Activated B cell treated with CpG ODN at 0.5 μM for 24 hours (primary cell): ENCODE measurements at regions of chr5 and their contacts with region 1.

Region 1: DNA sequence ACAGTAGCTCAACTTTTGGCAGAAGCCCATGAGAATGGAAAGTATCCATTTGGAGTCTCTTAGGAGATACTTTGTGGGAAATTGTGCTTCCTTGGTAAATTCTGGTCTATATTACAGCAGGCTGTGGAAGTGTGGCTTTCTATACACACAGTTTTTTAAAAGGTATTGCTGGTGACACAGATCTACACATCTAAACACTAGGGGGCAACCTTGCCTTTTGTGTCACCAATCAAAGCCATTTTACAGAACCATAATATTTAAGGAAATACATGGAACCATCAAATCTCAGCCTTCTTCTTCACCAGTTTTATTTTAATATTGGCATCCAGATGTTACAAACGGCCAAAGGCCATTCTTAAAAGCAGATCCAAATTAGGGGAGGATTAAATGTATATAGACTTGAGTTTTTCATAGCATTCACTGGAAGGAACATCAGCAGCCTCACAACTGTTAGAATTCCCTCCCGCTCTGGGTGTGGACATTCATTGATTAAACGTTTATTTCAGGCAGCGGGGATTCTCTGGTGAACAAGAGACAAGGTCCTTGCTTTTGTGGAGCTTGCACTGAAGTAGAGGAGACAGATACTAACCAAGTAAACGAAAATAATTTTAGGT is 132.4 kb upstream of the EPB41L4A start:
- DNase-seq: no peak
- ATAC-seq: peak; percentile 77
- H3K4me3 Mint-ChIP-seq: no peak overlapping the region
- H3K27ac Mint-ChIP-seq: no peak overlapping the region
- H3K4me1 Mint-ChIP-seq: peaks cover 33% of the 10 kb centered on the region
- H3K27me3 Mint-ChIP-seq: no peaks in the 10 kb centered on the region
- CTCF ChIP-seq: peak; percentile 16

Region 2: GRCh38 chr5:111830333-111830732 is 721.2 kb before region 1 on chr5:
- CTCF ChIA-PET with region 1: no interaction called
- POLR2A ChIA-PET with region 1: no interaction called
- intact Hi-C with region 1: no loop called
- DNase-seq: no peak
- ATAC-seq: no peak
- H3K4me3 Mint-ChIP-seq: no peak overlapping the region
- H3K27ac Mint-ChIP-seq: no peak overlapping the region
- H3K4me1 Mint-ChIP-seq: no peaks in the 10 kb centered on the region
- H3K27me3 Mint-ChIP-seq: no peaks in the 10 kb centered on the region
- CTCF ChIP-seq: no peak

Region 3: DNA sequence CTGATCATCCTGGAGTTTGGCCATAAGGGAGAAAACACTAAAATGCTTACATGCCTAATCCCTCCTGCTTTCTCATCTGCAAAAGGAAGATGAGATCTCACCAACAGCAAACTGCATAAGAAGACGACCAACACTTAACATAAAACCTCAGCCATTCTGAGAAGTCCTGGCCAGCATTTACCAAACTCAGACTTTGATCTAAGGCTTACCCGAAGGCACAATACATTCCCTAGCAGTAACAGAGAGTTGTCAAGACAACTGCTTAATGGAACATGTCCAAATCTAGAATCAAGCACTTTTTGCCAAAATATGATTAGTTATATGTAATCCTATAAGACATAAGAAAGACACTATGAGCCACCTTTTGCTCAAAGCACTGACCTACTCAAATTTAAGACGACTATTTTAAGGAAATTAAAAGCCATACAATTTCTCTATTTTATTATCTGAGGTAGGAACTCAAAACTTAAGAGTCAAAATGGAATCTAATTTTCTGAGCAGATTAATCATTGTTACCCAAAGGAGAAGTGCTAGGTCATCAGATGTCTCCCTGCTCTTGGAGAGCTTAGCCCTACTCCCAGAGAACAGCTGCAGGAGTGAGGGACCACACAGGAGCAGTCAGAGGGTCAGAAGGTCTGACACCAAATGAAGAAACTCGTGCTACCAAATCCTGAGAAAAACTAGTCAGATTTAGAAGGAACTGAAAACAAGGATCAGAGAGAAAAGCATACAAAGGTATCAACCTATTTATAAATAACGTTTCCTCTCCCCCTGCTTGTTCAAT is 171.8 kb before region 1 on chr5:
- CTCF ChIA-PET with region 1: no interaction called
- POLR2A ChIA-PET with region 1: no interaction called
- intact Hi-C with region 1: no loop called
- DNase-seq: no peak
- ATAC-seq: no peak
- H3K4me3 Mint-ChIP-seq: no peak overlapping the region
- H3K27ac Mint-ChIP-seq: no peak overlapping the region
- H3K4me1 Mint-ChIP-seq: peaks cover 4% of the 10 kb centered on the region
- H3K27me3 Mint-ChIP-seq: peaks cover 5% of the 10 kb centered on the region
- CTCF ChIP-seq: no peak

Region 4: DNA sequence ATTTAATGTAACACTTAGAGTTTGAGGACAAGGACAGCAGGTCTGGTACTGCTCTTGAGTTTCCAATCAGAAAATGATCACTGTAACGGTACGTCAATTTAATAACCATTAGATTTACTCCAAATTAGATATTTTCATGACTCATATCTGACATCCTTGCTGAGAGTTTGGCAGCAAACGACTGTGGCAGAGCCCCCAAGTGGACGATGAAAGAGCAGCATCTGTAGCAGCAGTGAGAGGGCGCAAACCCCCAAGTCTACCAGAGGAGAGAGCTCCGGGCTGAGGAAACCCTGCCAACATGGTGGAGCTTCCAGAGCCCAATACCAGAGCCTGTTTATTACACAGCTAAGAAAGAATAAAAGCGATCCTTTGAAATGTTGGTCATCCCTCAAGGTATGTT is 59.2 kb before region 1 on chr5:
- CTCF ChIA-PET with region 1: interaction called, 10 read pairs
- POLR2A ChIA-PET with region 1: no interaction called
- intact Hi-C with region 1: no loop called
- DNase-seq: no peak
- ATAC-seq: peak; percentile 98
- H3K4me3 Mint-ChIP-seq: no peak overlapping the region
- H3K27ac Mint-ChIP-seq: no peak overlapping the region
- H3K4me1 Mint-ChIP-seq: peaks cover 7% of the 10 kb centered on the region
- H3K27me3 Mint-ChIP-seq: no peaks in the 10 kb centered on the region
- CTCF ChIP-seq: no peak

Region 5: GRCh38 chr5:112604732-112605630 is 53.5 kb after region 1 on chr5:
- CTCF ChIA-PET with region 1: interaction called, 21 read pairs
- POLR2A ChIA-PET with region 1: interaction called, 3 read pairs
- intact Hi-C with region 1: loop called (anchors 1 kb)
- DNase-seq: no peak
- ATAC-seq: peak; percentile 98
- H3K4me3 Mint-ChIP-seq: no peak overlapping the region
- H3K27ac Mint-ChIP-seq: no peak overlapping the region
- H3K4me1 Mint-ChIP-seq: peaks cover 11% of the 10 kb centered on the region
- H3K27me3 Mint-ChIP-seq: no peaks in the 10 kb centered on the region
- CTCF ChIP-seq: no peak

Region 6: GRCh38 chr5:112757468-112758208 is 206.1 kb after region 1 on chr5:
- CTCF ChIA-PET with region 1: interaction called, 160 read pairs
- POLR2A ChIA-PET with region 1: interaction called, 3 read pairs
- intact Hi-C with region 1: loop called (anchors 1 kb)
- DNase-seq: no peak
- ATAC-seq: peak; percentile 81
- H3K4me3 Mint-ChIP-seq: no peak overlapping the region
- H3K27ac Mint-ChIP-seq: peak overlapping the region; percentile 46
- H3K4me1 Mint-ChIP-seq: peaks cover 12% of the 10 kb centered on the region
- H3K27me3 Mint-ChIP-seq: no peaks in the 10 kb centered on the region
- CTCF ChIP-seq: peak; percentile 82

Region 7: GRCh38 chr5:112848116-112848811 is 296.7 kb after region 1 on chr5:
- CTCF ChIA-PET with region 1: interaction called, 19 read pairs
- POLR2A ChIA-PET with region 1: no interaction called
- intact Hi-C with region 1: loop called (anchors 1 kb)
- DNase-seq: no peak
- ATAC-seq: peak; percentile 100
- H3K4me3 Mint-ChIP-seq: peak overlapping the region; percentile 1
- H3K27ac Mint-ChIP-seq: peak overlapping the region; percentile 64
- H3K4me1 Mint-ChIP-seq: peaks cover 8% of the 10 kb centered on the region
- H3K27me3 Mint-ChIP-seq: no peaks in the 10 kb centered on the region
- CTCF ChIP-seq: no peak

Region 8: DNA sequence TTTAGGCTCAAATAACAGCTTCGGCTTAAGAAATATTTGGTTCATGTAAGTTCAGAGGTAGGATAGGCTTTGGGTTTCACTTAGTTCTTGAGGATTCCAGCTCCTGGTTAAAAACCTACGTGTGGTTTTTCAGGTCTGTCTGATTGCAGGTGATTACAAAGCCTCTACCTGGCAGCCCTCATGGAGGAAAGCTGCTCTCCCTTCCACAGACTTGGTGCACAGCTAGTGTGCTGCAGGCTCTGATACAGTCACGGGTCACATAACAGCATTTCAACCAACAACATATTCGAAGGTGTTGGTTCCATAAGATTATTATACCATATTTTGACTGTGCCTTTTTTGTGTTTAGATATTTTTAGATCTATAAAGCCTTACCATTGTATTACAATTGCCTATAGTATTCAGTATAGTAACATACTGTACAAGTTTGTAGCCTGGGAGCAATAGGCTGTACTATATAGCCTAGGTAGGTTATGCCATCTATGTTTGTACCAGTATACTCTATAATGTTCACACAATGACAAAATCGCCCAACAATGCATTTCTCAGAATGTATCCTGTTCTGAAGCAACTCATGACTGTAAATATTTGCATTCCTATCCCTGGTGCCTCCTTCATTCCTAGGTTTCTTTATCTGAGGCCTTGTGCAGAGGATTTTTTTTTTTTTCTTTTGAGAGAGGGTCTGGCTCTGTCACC is 417.0 kb after region 1 on chr5:
- CTCF ChIA-PET with region 1: no interaction called
- POLR2A ChIA-PET with region 1: no interaction called
- intact Hi-C with region 1: loop called (anchors 1 kb)
- DNase-seq: no peak
- ATAC-seq: no peak
- H3K4me3 Mint-ChIP-seq: no peak overlapping the region
- H3K27ac Mint-ChIP-seq: no peak overlapping the region
- H3K4me1 Mint-ChIP-seq: peaks cover 16% of the 10 kb centered on the region
- H3K27me3 Mint-ChIP-seq: no peaks in the 10 kb centered on the region
- CTCF ChIP-seq: no peak

Region 9: DNA sequence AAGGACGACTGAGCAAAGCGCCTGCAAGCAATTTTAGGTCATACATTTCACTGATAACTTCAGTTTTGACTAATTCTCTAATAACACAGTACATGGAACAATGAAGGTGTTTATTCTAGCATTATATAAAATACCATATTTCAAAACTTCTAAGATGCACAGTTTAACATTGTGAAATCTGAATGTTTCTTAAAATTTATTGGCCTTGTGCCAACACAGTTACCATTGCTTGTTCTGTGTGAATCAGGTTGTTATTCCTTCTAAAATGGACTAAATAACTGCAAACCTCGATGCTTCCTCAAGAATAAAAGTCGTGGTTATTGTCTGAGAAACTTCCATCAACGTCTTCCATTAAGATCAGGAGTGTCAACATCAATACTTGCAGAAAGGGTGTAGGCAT is 928.7 kb after region 1 on chr5:
- CTCF ChIA-PET with region 1: no interaction called
- POLR2A ChIA-PET with region 1: no interaction called
- intact Hi-C with region 1: no loop called
- DNase-seq: no peak
- ATAC-seq: no peak
- H3K4me3 Mint-ChIP-seq: no peak overlapping the region
- H3K27ac Mint-ChIP-seq: no peak overlapping the region
- H3K4me1 Mint-ChIP-seq: no peaks in the 10 kb centered on the region
- H3K27me3 Mint-ChIP-seq: peaks cover 25% of the 10 kb centered on the region
- CTCF ChIP-seq: no peak